Activated T-helper 2 cell treated with anti-CD3 and anti-CD28 coated beads, Interferon-gamma antibody, Interleukin-2, Interleukin-4, amounts not matched to agents 10 μg/mL and 5 μg/mL and 100 μg/mL, durations not matched to agents 14 hours and 24 hours and 36 hours (primary cell): ENCODE measurements at regions of chr15 and their contacts with region 1.

Region 1: GRCh38 chr15:40506964-40507571 is 36.3 kb downstream of the CHST14 start:
- DNase-seq: peak; percentile 41
- H3K4me3 Mint-ChIP-seq: peak overlapping the region; percentile 45
- H3K27ac Mint-ChIP-seq: no peak overlapping the region
- H3K4me1 Mint-ChIP-seq: peaks cover 22% of the 10 kb centered on the region
- H3K27me3 Mint-ChIP-seq: peaks cover 66% of the 10 kb centered on the region

Region 2: GRCh38 chr15:40440743-40441564 is 66.1 kb before region 1 on chr15 and contains the start of gene BAHD1:
- intact Hi-C with region 1: loop called (anchors 5 kb)
- DNase-seq: peak; percentile 94
- H3K4me3 Mint-ChIP-seq: peak within 1 kb of the TSS; percentile 91
- H3K27ac Mint-ChIP-seq: peak within 1 kb of the TSS; percentile 77
- H3K4me1 Mint-ChIP-seq: peaks cover 37% of the 10 kb centered on the region
- H3K27me3 Mint-ChIP-seq: peaks cover 52% of the 10 kb centered on the region
- total RNA-seq, gene BAHD1: 26.5 and 26.7 TPM in 2 replicates

Region 3: DNA sequence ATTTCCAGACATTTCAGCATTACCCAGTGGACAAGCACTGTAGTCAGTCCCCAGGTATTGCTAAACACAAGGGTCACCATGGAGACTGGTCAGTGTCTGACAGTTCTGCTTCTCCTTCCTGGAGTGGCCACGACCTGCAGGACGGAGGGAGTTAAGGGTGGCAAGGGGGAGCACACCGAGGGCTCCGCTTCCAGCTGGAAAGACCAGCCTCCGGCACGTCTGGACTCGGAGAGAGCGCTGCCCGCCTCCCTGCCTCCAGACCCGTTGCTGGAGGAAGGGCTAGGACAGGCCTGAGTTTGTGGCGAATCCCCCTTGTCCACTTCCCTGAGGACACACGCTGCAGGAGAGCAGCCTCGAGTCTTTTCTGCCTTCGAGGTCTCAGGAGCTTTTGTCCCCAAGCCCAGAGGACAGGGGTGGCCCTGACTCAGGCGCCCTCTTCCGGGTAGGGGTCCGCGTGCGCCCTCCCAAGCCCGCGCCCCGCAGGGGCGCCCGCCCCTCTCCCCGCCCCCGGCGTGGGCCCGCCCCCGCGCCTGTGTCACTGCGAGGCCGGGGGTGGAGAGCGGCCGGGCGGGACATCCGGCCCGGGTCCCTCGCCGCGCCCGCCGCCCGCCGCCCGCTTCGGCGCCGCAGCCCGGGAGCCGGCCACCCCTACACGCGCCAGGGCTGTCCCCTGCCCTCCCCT is 36.5 kb before region 1 on chr15 and contains the start of gene CHST14:
- intact Hi-C with region 1: loop called (anchors 5 kb)
- DNase-seq: peak; percentile 43
- H3K4me3 Mint-ChIP-seq: peak within 1 kb of the TSS; percentile 86
- H3K27ac Mint-ChIP-seq: peak within 1 kb of the TSS; percentile 68
- H3K4me1 Mint-ChIP-seq: peaks cover 27% of the 10 kb centered on the region
- H3K27me3 Mint-ChIP-seq: no peaks in the 10 kb centered on the region
- total RNA-seq, gene CHST14: 11.8 and 12.2 TPM in 2 replicates

Region 4: DNA sequence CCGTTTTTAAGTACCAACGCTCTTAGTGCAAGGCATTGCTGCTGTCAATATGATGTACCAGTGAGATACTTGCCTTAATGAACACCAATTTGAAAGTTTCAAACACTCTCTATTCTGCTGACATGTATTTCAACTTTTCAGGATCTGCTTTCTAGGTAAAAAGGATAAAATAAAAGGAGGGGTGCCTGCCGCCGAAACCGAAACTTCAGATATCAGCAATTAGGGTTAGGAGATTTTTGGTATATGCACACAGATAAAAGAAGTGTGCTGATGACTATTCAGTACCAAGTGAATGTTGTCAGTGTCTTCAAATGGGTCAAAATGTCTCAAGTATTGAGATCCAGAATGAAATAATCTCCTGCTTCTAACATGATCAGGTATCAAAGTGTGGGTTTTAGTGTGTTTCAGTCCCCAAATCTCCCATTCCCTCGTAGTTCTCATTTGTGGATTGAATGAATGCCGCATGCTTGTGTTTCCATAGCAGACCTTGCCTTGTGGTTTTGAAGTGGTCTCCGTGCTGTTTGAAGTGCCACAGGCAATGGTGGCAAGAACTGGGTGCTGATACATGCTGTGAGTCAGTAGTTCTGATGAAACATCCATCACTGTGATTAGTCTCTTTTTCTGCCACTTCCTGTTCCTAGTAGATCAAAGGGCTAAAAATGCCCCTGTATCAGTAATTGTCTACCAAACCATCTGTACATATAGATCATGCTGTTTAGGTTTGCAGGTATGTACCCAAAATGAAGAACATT is 13.8 kb before region 1 on chr15:
- intact Hi-C with region 1: loop called (anchors 2 kb)
- DNase-seq: peak; percentile 23
- H3K4me3 Mint-ChIP-seq: no peak overlapping the region
- H3K27ac Mint-ChIP-seq: peak overlapping the region; percentile 58
- H3K4me1 Mint-ChIP-seq: peaks cover 24% of the 10 kb centered on the region
- H3K27me3 Mint-ChIP-seq: no peaks in the 10 kb centered on the region